ENCODE measurements at regions of chr17 and their contacts with region 1.

Region 1: GRCh38 chr17:2222901-2223616 is 80.5 kb downstream of the SMG6 start:
- DNase-seq: no peak
- H3K4me3 ChIP-seq: no peak overlapping the region
- H3K27ac ChIP-seq: no peak overlapping the region
- H3K4me1 ChIP-seq: no peaks in the 10 kb centered on the region
- H3K27me3 ChIP-seq: no peaks in the 10 kb centered on the region
- CTCF ChIP-seq: no peak
- EP300 ChIP-seq: no peak
- POLR2A ChIP-seq: no peak
- RAD21 ChIP-seq: no peak

Region 2: GRCh38 chr17:2207815-2208515 is 15.1 kb before region 1 on chr17:
- CTCF ChIA-PET with region 1: interaction called, 13 read pairs
- POLR2A ChIA-PET with region 1: interaction called, 3 read pairs
- DNase-seq: no peak
- H3K4me3 ChIP-seq: no peak overlapping the region
- H3K27ac ChIP-seq: no peak overlapping the region
- H3K4me1 ChIP-seq: peaks cover 0 to 3% (median 0%) of the 10 kb centered on the region in 4 experiments; a peak in 1 of 7 replicates
- H3K27me3 ChIP-seq: no peaks in the 10 kb centered on the region
- CTCF ChIP-seq: no peak
- EP300 ChIP-seq: no peak
- POLR2A ChIP-seq: no peak
- RAD21 ChIP-seq: no peak